Calu3 (cell line): ENCODE measurements at regions of chr5 and their contacts with region 1.

Region 1: DNA sequence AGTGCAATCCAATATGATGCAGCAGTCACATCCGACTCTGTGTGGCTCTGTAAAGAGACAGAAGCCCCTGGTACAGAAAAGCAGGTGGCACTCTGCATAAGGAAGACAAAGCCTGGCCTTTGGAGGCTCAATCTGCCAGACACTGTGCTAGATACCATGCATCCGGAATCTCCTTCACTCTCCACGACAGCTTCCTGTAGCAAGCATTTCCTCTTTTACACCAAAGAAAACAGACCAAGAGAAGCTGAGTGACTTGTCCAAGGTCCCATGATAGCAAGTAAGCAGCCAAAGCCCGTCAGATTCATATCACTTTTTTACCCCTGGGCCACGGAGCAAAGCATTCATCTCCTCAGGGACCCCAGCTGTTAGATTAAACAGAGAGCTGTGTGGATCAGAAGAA is 64.2 kb upstream of the SMIM23 start:
- DNase-seq: no peak
- H3K4me3 Mint-ChIP-seq: no peak overlapping the region
- H3K27ac Mint-ChIP-seq: no peak overlapping the region
- H3K4me1 Mint-ChIP-seq: no peaks in the 10 kb centered on the region
- H3K27me3 Mint-ChIP-seq: peaks cover 99% of the 10 kb centered on the region
- CTCF ChIP-seq: no peak

Region 2: DNA sequence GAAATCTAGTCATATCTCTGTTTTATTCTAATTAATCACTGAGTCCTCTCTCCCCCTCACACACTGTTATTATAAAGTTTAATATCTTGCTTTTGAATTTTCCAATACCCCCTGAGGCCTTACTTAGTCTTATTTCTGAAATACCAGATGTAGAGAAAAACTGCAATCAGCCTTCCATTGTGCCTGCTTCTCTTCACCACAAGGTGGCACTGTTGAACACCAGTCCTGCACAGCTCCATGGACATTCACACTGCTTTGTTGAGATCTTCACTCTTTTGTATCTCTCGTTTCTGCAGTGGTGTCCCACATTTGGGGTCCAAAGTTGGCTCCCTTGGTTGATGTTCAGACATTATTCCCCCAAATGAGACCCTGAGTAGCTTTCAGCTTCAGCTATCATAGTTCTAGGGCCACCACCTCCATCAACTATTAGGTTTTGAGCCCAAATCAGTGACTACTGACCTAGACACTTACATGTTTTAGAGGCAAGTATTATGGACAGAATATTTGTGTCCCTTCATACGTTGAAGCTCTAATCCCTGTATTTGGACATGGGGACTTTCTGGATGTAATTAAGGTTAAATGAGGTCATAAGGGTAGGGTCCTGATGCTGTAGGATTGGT is 1870.7 kb after region 1 on chr5:
- CTCF ChIA-PET with region 1: interaction called, 14 read pairs
- intact Hi-C with region 1: no loop called
- DNase-seq: no peak
- H3K4me3 Mint-ChIP-seq: no peak overlapping the region
- H3K27ac Mint-ChIP-seq: no peak overlapping the region
- H3K4me1 Mint-ChIP-seq: no peaks in the 10 kb centered on the region
- H3K27me3 Mint-ChIP-seq: no peaks in the 10 kb centered on the region
- CTCF ChIP-seq: peak; percentile 75